ENCODE measurements at regions of chr6 and their contacts with region 1.

Region 1: DNA sequence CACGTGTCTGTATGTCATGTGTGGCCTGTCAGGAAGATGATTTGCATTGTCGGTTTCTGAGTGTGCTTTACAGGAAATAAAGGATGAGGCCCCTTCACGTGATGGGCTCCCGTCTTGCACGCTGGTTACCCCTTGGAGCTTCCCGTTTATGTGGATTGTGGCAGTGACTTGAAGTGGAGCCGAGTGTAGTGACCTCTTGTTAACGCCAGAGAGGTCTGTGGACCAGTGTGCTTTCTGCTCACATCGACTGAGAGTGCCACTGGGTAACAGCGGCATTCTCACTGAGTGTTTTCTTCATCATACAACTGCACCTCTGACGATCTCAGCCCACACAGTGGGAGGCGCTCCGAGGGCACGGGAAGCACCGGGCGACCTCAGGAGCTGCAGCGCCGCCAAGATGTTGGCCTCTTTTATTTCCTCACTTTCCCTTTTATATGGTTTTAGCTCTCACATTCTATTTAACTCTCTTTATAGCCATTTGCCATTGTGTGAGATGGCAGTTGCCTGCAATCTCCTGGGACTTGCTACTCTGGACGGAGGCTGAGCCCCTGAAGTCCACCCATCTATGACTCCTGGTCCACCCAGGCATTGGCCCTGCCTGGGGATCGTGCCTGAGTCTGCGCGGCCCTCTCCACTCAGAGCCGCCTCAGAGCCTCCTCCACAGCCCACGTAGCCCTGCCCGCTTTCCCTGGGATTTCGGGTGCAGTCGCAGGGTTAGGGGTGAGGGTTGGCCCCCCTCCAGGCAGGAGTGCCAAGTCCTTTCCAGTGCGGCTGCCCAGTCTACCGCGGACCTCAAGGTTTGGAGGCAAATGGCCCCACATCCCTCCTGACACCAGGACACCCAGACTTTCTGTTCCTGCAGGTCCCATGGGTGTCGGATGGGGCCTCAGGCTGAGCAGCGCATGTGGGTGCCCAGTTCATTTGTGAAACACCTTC is 238.9 kb downstream of the ERMARD start:
- DNase-seq: peak; percentile 86
- H3K4me3 Mint-ChIP-seq: peak overlapping the region; percentile 52
- H3K27ac Mint-ChIP-seq: peak overlapping the region; percentile 75
- H3K4me1 Mint-ChIP-seq: peaks cover 25% of the 10 kb centered on the region
- H3K27me3 Mint-ChIP-seq: no peaks in the 10 kb centered on the region

Region 2: DNA sequence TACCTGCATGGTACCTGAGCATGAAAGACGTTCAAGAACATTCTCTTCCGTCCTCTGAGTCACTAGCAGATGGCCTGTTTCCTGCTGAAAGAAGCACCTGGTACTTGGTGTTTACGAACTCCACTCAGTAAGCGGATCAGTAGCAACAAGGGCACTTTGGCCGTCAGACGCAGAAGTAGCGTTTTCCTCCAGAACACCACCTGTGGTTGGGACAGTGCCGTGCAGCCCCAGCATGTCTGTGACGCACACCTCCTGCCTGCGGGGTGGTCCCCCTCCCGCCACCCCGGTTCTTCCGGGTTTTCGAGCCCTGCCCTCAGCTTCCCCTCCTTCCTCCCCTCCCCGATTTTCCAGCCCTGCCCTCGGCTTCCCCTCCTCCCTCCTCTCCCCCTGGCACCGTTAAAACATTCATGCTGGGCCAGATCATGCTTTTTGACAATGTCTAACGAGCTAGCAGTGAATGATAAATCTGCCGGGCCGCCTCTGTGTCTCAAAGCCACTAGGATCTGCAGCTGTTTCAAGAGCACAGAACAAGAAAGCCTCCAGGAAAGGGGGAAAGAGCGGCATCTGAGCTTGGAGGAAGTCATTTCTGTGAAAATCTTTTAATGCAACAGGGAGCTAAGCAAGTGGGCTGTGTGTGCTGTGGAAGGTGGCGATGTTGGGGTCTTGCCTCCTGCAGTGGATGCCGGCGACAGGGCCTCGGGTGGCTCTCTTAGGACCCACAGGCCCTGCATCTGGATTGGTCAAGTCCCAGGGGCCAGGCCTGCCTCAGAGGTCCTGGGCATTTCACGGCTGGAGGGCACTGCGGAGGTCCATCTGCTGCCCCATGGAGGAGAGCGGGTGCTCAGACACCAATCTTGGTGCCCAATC is 31.0 kb before region 1 on chr6:
- CTCF ChIA-PET with region 1: no interaction called
- POLR2A ChIA-PET with region 1: no interaction called
- intact Hi-C with region 1: loop called (anchors 5 kb)
- DNase-seq: peak; percentile 56
- H3K4me3 Mint-ChIP-seq: no peak overlapping the region
- H3K27ac Mint-ChIP-seq: no peak overlapping the region
- H3K4me1 Mint-ChIP-seq: peaks cover 12% of the 10 kb centered on the region
- H3K27me3 Mint-ChIP-seq: peaks cover 19% of the 10 kb centered on the region

Region 3: DNA sequence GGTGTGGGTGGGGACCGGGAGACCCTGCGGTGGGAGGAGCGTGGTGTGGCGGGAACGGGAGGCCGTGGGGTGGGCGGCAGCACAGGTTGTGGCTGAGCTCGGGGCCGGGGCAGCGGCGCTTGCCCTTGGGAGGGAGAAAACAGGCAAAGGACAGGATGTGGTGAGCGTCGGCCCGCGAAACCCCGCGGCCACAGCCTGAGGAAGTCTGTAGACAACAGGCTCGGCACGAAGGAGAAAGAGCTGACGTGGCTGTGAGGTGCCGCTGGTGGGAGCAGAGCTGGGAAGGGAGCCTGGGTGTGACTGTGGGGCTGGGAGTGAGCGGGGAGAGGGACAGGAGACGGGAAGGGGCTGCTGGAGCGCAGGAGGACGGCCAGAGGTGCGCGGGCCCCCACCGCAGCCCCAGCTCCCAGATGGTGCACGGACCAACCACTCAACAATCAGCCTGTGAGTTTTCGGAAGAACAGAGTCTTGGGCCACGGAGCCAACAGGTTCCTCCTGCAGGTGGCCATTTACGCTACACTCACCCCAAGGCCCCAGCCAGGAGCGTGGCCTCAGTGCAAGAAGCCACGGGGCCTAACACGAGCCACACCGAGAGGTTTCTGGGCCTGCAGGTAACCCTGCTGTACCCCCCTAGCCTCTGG is 97.7 kb after region 1 on chr6:
- CTCF ChIA-PET with region 1: interaction called, 3 read pairs
- POLR2A ChIA-PET with region 1: no interaction called
- intact Hi-C with region 1: loop called (anchors 2 kb)
- DNase-seq: peak; percentile 75
- H3K4me3 Mint-ChIP-seq: peak overlapping the region; percentile 68
- H3K27ac Mint-ChIP-seq: peak overlapping the region; percentile 85
- H3K4me1 Mint-ChIP-seq: peaks cover 31% of the 10 kb centered on the region
- H3K27me3 Mint-ChIP-seq: no peaks in the 10 kb centered on the region

Region 4: GRCh38 chr6:170147832-170148708 is 157.7 kb after region 1 on chr6:
- CTCF ChIA-PET with region 1: no interaction called
- POLR2A ChIA-PET with region 1: no interaction called
- intact Hi-C with region 1: loop called (anchors 2 kb)
- DNase-seq: peak; percentile 71
- H3K4me3 Mint-ChIP-seq: peak overlapping the region; percentile 62
- H3K27ac Mint-ChIP-seq: peak overlapping the region; percentile 85
- H3K4me1 Mint-ChIP-seq: peaks cover 40% of the 10 kb centered on the region
- H3K27me3 Mint-ChIP-seq: peaks cover 14% of the 10 kb centered on the region

Region 5: GRCh38 chr6:170271771-170272314 is 281.5 kb after region 1 on chr6:
- CTCF ChIA-PET with region 1: no interaction called
- POLR2A ChIA-PET with region 1: no interaction called
- intact Hi-C with region 1: loop called (anchors 1 kb)
- DNase-seq: peak; percentile 88
- H3K4me3 Mint-ChIP-seq: peak overlapping the region; percentile 60
- H3K27ac Mint-ChIP-seq: peak overlapping the region; percentile 33
- H3K4me1 Mint-ChIP-seq: peaks cover 18% of the 10 kb centered on the region
- H3K27me3 Mint-ChIP-seq: peaks cover 18% of the 10 kb centered on the region

Region 6: DNA sequence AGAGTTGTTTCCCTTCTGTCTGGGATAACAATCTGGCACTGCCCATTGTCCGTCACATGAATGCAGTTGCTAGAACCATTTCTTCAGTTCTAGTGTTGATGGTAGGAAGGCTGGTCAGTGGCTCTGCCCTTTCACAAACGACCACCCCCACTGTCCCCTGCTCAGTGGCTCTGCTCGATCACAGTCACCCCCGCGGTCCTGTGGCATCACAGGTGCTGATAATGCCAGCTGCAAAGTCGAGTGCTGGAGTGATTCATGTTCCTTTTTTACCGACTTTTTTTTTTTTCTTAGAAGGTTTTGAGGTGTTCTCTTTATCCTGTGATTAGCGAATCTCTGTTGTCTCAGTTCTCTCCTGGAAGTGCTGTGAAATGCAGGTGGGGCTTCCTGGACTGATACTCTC is 339.0 kb after region 1 on chr6:
- CTCF ChIA-PET with region 1: no interaction called
- POLR2A ChIA-PET with region 1: no interaction called
- intact Hi-C with region 1: no loop called
- DNase-seq: no peak
- H3K4me3 Mint-ChIP-seq: no peak overlapping the region
- H3K27ac Mint-ChIP-seq: no peak overlapping the region
- H3K4me1 Mint-ChIP-seq: peaks cover 8% of the 10 kb centered on the region
- H3K27me3 Mint-ChIP-seq: no peaks in the 10 kb centered on the region